ENCODE measurements at regions of chr15 and their contacts with region 1.

Region 1: DNA sequence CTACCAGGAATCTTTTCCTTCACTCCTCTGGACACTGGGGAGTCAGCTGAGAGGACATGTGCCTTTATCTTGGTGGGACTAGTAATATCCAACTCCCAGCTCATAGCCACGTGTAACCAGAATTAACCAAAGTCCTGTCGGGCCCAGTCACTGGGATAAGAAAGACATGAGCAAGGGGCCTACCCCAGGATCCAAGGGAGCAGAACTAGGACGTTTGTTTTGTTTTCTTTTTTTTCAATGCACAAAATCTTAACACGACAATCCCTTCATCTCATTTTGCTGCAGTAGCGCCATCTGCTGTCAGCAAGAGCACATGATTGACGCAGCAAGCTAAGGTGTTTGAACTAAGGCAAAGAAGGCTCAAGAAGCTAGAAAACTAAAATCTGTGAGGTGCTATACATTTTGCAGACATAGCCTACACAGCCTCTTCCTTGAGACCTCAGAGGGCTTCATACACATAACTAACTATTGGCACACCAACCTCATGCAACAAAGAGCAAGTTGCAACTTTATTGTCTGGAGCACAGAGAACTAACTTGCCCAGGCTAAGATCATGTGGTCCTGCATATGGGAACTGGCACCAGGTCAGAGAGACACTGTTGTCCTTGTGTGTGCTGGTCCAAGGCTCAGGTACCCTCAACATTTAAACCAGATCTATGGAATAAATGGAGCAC is 43.6 kb downstream of the RLBP1 start:
- DNase-seq: peak; percentile 73
- H3K4me3 ChIP-seq: no peak overlapping the region
- H3K27ac ChIP-seq: no peak overlapping the region
- H3K4me1 ChIP-seq: peaks cover 8% of the 10 kb centered on the region
- H3K27me3 ChIP-seq: no peaks in the 10 kb centered on the region
- CTCF ChIP-seq: peak; percentile 82 to 89
- POLR2A ChIP-seq: no peak

Region 2: GRCh38 chr15:88243895-88244787 is 933.6 kb before region 1 on chr15:
- CTCF ChIA-PET with region 1: no interaction called
- POLR2A ChIA-PET with region 1: no interaction called
- dilution Hi-C with region 1: no loop called
- intact Hi-C with region 1: no loop called
- DNase-seq: peak; percentile 22
- H3K4me3 ChIP-seq: no peak overlapping the region
- H3K27ac ChIP-seq: no peak overlapping the region
- H3K4me1 ChIP-seq: no peaks in the 10 kb centered on the region
- H3K27me3 ChIP-seq: no peaks in the 10 kb centered on the region
- CTCF ChIP-seq: peak; percentile 50 to 54
- POLR2A ChIP-seq: no peak

Region 3: DNA sequence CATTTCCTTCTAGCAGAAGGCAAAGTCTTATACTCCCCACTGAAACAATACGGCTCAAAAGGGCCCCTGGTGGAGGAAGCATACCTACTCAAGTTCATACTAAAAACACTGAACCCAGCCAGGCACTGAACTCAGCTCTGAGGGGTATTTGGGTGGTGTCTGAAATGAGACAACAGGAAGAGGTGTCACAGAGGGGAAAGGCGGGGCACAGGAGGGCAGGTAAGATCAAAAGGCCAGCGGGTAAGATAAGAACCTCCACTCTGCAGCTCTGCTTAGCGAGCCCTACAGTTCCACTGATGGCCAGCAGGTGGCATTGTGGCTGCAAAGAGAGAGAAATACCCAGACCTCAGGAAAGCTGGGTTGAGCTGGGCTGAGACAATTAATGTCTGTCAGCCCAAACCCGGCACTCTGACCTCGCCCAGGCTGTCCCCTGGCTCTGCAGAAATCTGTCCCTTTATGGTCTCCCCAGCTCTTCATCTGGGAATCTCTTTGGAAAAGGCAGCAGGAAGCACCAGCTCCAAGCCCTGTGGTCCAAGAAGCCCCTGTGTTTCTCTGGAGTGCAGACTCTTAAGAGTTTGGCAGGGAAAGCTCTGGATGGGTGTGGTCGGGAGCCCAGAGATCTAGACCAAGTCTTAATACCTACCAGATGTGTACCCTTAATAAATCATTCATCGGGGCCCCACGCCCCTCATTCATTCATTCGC is 273.0 kb before region 1 on chr15:
- CTCF ChIA-PET with region 1: interaction called, 53 read pairs
- POLR2A ChIA-PET with region 1: no interaction called
- dilution Hi-C with region 1: no loop called
- intact Hi-C with region 1: loop called (anchors 1 kb)
- DNase-seq: peak; percentile 78
- H3K4me3 ChIP-seq: no peak overlapping the region
- H3K27ac ChIP-seq: no peak overlapping the region
- H3K4me1 ChIP-seq: no peaks in the 10 kb centered on the region
- H3K27me3 ChIP-seq: no peaks in the 10 kb centered on the region
- CTCF ChIP-seq: peak; percentile 97 to 98
- POLR2A ChIP-seq: no peak

Region 4: DNA sequence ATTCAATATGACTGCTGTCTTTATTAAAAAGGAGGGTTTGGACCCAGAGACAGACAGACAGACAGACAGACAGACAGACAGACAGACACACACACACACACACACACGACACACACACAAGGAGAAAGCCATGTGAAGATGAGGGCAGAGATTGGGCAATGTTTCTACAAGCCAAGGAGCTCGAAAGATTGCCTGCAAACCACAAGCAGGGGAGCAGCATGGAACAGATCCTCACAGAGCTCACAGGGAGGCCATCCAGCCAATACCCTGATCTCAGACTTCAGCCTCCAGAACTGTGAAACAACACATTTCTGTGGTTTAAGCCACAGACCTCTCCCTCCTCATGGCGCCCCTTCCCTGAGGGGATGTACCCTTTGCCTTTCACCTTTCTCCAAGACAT is 125.3 kb before region 1 on chr15:
- CTCF ChIA-PET with region 1: interaction called, 198 read pairs
- POLR2A ChIA-PET with region 1: no interaction called
- dilution Hi-C with region 1: loop called (anchors 25 kb)
- intact Hi-C with region 1: loop called (anchors 1 kb)
- DNase-seq: no peak
- H3K4me3 ChIP-seq: no peak overlapping the region
- H3K27ac ChIP-seq: no peak overlapping the region
- H3K4me1 ChIP-seq: no peaks in the 10 kb centered on the region
- H3K27me3 ChIP-seq: no peaks in the 10 kb centered on the region
- CTCF ChIP-seq: no peak
- POLR2A ChIP-seq: no peak

Region 5: DNA sequence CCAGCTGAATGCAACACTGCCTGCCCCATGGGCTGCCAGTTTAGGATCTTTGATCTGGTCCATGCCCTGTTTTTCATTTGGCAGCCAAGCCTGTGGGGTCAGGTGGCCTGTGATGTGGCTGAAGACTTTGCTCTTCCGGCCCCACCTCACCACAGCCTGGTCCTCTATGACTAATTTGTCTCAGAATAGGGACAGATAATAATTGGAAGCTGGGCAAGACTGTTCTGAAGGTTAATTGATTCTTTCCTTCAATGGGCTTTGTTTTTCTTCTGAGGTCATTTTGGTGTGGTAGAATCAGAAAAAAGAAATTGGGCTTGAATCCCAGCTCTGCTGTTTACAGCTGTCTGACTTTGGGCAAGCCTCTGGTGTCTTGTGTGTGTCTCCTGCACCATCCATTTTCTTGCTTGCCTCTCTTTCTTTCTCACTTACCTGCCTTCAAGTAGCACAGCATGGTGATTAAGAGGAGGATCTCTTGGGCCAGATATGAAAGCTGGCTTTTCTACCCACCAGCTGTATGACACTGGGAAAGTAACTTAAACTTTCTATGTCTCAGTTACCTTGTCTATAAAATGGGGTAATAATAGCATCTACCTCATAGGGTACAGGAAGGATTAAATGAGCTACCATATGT is 65.3 kb before region 1 on chr15:
- CTCF ChIA-PET with region 1: interaction called, 14 read pairs
- POLR2A ChIA-PET with region 1: no interaction called
- dilution Hi-C with region 1: no loop called
- intact Hi-C with region 1: no loop called
- DNase-seq: peak; percentile 73
- H3K4me3 ChIP-seq: no peak overlapping the region
- H3K27ac ChIP-seq: peak overlapping the region; percentile 62
- H3K4me1 ChIP-seq: peaks cover 16% of the 10 kb centered on the region
- H3K27me3 ChIP-seq: no peaks in the 10 kb centered on the region
- CTCF ChIP-seq: no peak
- POLR2A ChIP-seq: no peak

Region 6: GRCh38 chr15:89150762-89151664 is 26.8 kb before region 1 on chr15:
- CTCF ChIA-PET with region 1: interaction called, 12 read pairs
- POLR2A ChIA-PET with region 1: no interaction called
- dilution Hi-C with region 1: no loop called
- intact Hi-C with region 1: no loop called
- DNase-seq: no peak
- H3K4me3 ChIP-seq: no peak overlapping the region
- H3K27ac ChIP-seq: no peak overlapping the region
- H3K4me1 ChIP-seq: peaks cover 8% of the 10 kb centered on the region
- H3K27me3 ChIP-seq: no peaks in the 10 kb centered on the region
- CTCF ChIP-seq: no peak
- POLR2A ChIP-seq: no peak

Region 7: GRCh38 chr15:89230277-89230676 is 52.5 kb after region 1 on chr15:
- CTCF ChIA-PET with region 1: no interaction called
- POLR2A ChIA-PET with region 1: no interaction called
- dilution Hi-C with region 1: no loop called
- intact Hi-C with region 1: no loop called
- DNase-seq: no peak
- H3K4me3 ChIP-seq: no peak overlapping the region
- H3K27ac ChIP-seq: no peak overlapping the region
- H3K4me1 ChIP-seq: no peaks in the 10 kb centered on the region
- H3K27me3 ChIP-seq: peaks cover under 1 to 3% of the 10 kb centered on the region in 2 experiments
- CTCF ChIP-seq: no peak
- POLR2A ChIP-seq: no peak

Measured in endothelial cell of umbilical vein (primary cell).